ENCODE measurements at regions of chr12 and their contacts with region 1.

Region 1: GRCh38 chr12:46205294-46205693 is 63.5 kb downstream of the SLC38A1 start:
- DNase-seq: no peak
- H3K4me3 ChIP-seq: no peak overlapping the region
- H3K4me3 Mint-ChIP-seq: no peak overlapping the region
- H3K27ac ChIP-seq: no peak overlapping the region
- H3K27ac Mint-ChIP-seq: peak overlapping the region in 4 of 8 donors; percentile 9 to 64 (median 38)
- H3K4me1 ChIP-seq: peaks cover 30% of the 10 kb centered on the region
- H3K4me1 Mint-ChIP-seq: peaks cover 45 to 62% (median 51%) of the 10 kb centered on the region in 3 donors
- H3K27me3 ChIP-seq: no peaks in the 10 kb centered on the region
- H3K27me3 Mint-ChIP-seq: no peaks in the 10 kb centered on the region

Region 2: DNA sequence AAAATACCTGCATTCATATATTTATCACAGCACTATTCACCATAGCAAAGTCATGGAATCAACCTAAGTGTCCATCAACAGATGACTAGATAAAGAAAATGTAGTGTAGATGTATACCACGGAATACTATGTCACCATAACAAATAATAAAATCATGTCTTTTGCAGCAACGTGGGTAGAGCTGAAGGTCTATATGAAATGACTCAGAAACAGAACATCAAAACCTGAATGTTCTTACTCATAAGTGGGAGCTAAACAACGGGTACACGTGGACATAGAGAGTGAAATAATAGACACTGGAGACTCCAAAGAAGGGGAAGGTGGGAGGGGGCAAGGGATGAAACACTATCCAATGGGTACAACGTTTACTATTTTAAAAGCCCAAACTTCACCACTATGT is 25.7 kb after region 1 on chr12:
- CTCF ChIA-PET with region 1: no interaction called
- POLR2A ChIA-PET with region 1: no interaction called
- DNase-seq: no peak
- H3K4me3 ChIP-seq: no peak overlapping the region
- H3K4me3 Mint-ChIP-seq: no peak overlapping the region
- H3K27ac ChIP-seq: no peak overlapping the region
- H3K27ac Mint-ChIP-seq: peak overlapping the region; percentile 14 to 90 (median 68)
- H3K4me1 ChIP-seq: peaks cover 36% of the 10 kb centered on the region
- H3K4me1 Mint-ChIP-seq: peaks cover 67 to 93% (median 89%) of the 10 kb centered on the region in 3 donors
- H3K27me3 ChIP-seq: no peaks in the 10 kb centered on the region
- H3K27me3 Mint-ChIP-seq: no peaks in the 10 kb centered on the region

Region 3: GRCh38 chr12:46303039-46303666 is 97.9 kb after region 1 on chr12:
- CTCF ChIA-PET with region 1: interaction called, 12 read pairs
- POLR2A ChIA-PET with region 1: interaction called, 3 read pairs
- DNase-seq: peak; percentile 18 to 72 (median 49)
- H3K4me3 ChIP-seq: no peak overlapping the region
- H3K4me3 Mint-ChIP-seq: no peak overlapping the region
- H3K27ac ChIP-seq: no peak overlapping the region
- H3K27ac Mint-ChIP-seq: peak overlapping the region in 1 of 8 donors; percentile 22
- H3K4me1 ChIP-seq: no peaks in the 10 kb centered on the region
- H3K4me1 Mint-ChIP-seq: peaks cover 1 to 8% (median 6%) of the 10 kb centered on the region in 3 donors
- H3K27me3 ChIP-seq: no peaks in the 10 kb centered on the region
- H3K27me3 Mint-ChIP-seq: peaks cover 1 to 3% of the 10 kb centered on the region in 2 donors

Measured in CD8-positive, alpha-beta memory T cell (primary cell).